ENCODE measurements at regions of chr4 and their contacts with region 1.

Region 1: DNA sequence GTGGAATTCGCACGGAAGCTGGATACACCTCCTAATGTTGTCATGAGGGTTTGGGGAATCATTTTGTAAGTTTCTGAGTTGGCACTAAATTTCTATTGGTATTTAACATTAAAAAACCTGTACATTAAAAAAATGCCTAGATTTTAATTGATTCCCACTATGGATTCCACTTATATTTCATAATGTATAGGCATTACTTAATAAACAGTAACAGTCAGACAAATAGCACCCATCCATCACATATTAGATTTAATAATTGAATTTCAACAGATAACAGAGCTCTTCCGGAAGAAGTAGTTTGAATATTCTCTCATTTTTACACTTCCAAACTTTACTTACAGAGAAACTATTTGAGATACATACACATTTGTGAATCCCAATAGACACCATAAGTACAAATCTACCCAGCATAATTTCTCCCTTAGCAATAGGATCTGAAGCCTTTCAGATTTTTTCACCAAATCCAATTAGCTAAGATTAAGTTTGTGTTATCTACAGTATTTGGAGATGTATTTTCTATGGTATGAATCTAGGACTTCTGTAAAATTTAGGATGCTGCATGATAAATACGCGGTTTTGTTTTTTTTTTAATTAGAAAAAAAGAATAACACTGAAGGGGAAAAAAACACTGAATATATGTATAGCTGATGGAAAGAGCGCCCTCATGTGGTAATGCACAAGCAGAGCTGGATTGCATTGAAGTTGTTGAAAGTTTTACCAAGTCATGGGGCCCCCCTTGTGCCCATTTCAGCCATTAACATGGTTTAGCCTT is 12.2 kb upstream of the ODAM start:
- DNase-seq: peak in 1 of 3 donors; percentile 44
- ATAC-seq: peak; percentile 75 to 85 (median 78)
- H3K4me3 ChIP-seq: no peak overlapping the region
- H3K27ac ChIP-seq: no peak overlapping the region
- H3K4me1 ChIP-seq: peaks cover 0 to 7% (median 3%) of the 10 kb centered on the region in 4 donors
- H3K27me3 ChIP-seq: no peaks in the 10 kb centered on the region
- CTCF ChIP-seq: peak; percentile 50 to 70 (median 66)
- POLR2A ChIP-seq: no peak

Region 2: GRCh38 chr4:69896530-69897116 is 286.7 kb before region 1 on chr4:
- intact Hi-C with region 1: loop called in 1 of 2 experiments (anchors 10 kb)
- DNase-seq: no peak
- ATAC-seq: peak in 1 of 4 donors; percentile 31
- H3K4me3 ChIP-seq: no peak overlapping the region
- H3K27ac ChIP-seq: no peak overlapping the region
- H3K4me1 ChIP-seq: no peaks in the 10 kb centered on the region
- H3K27me3 ChIP-seq: no peaks in the 10 kb centered on the region
- CTCF ChIP-seq: peak; percentile 52 to 56 (median 55)
- POLR2A ChIP-seq: no peak

Measured in right lobe of liver (tissue), 6 donors.